ENCODE measurements at regions of chr4 and their contacts with region 1.

Region 1: GRCh38 chr4:156771171-156771837 is 200.3 kb downstream of the PDGFC start:
- DNase-seq: peak in 1 of 2 donors; percentile 51
- ATAC-seq: peak; percentile 75
- H3K4me3 ChIP-seq: peak overlapping the region; percentile 26 to 76
- H3K27ac ChIP-seq: peak overlapping the region; percentile 59 to 67
- H3K4me1 ChIP-seq: peaks cover 7% of the 10 kb centered on the region in 2 donors
- H3K27me3 ChIP-seq: no peaks in the 10 kb centered on the region

Region 2: DNA sequence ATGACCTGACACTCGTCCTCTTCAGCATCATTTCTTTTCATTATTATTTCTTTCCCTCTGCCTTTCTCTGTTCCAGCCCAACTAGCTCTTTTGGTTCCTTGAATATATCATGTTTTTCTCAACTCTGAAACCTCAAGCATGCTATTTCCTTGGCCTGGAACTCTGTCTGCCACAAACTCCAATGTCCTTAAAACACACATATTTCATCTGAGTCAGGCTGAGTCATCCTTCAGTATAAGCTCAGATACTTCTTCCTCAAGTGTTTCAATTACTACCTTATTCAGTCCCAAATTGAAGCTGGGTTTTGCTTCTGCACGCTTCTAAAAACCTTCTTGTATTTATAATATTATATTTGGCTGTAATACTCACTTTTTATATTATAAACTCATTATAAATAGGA is 223.9 kb before region 1 on chr4:
- intact Hi-C with region 1: loop called in 1 of 2 experiments (anchors 10 kb)
- DNase-seq: no peak
- ATAC-seq: peak; percentile 79
- H3K4me3 ChIP-seq: no peak overlapping the region
- H3K27ac ChIP-seq: peak overlapping the region in 1 of 2 donors; percentile 93
- H3K4me1 ChIP-seq: peaks cover 1 to 25% of the 10 kb centered on the region in 2 donors
- H3K27me3 ChIP-seq: no peaks in the 10 kb centered on the region

Region 3: GRCh38 chr4:156594624-156595023 is 176.7 kb before region 1 on chr4:
- intact Hi-C with region 1: no loop called
- DNase-seq: peak; percentile 69 to 84
- ATAC-seq: no peak
- H3K4me3 ChIP-seq: no peak overlapping the region
- H3K27ac ChIP-seq: no peak overlapping the region
- H3K4me1 ChIP-seq: peaks cover 0 to 4% of the 10 kb centered on the region in 2 donors
- H3K27me3 ChIP-seq: no peaks in the 10 kb centered on the region

Region 4: GRCh38 chr4:156941940-156942548 is 170.7 kb after region 1 on chr4:
- intact Hi-C with region 1: loop called (anchors 5 kb)
- DNase-seq: peak; percentile 59 to 84
- ATAC-seq: peak; percentile 82
- H3K4me3 ChIP-seq: peak overlapping the region; percentile 31 to 64
- H3K27ac ChIP-seq: peak overlapping the region; percentile 26 to 33
- H3K4me1 ChIP-seq: peaks cover 6 to 18% of the 10 kb centered on the region in 2 donors
- H3K27me3 ChIP-seq: no peaks in the 10 kb centered on the region

Measured in aorta (tissue), 5 donors.